Naive thymus-derived CD4-positive, alpha-beta T cell (primary cell): ENCODE measurements at regions of chr22 and their contacts with region 1.

Region 1: DNA sequence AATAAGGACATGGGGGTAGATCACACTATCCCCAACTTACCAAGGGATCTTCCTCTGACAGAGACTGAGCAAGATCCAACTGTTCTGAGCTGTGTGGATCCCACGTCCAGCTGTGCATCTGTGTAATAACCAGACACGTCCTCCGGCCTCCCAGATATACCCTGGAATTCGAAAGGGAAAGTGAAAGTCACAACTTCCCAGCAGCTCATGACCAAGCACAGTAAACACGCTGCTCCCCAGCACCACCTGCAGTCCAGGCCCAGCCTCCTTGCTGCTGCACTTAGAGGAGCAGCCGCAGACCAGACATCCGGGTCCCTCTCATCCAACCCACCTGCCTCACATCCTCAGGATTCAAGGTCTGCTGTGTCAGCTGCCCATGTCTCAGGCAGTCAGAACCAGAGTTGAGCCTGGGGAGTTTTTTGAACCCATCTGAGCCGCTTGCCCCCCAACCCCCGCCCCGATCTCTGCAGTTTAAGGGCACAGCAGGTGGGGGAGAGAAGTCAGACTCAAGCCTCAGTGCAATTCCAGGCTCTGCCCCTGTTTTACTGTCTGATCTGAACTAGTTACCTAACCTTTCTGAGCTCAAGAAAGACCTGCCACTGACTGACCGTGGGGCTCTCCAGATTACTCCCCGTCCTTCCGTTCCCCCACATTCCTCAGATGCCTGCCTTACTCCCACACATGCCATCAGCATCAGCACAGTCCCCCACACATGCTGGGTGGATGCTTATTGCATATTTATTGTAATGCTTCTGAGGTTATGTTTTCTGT is at the start of gene APOL2:
- DNase-seq: peak; percentile 52 to 88 (median 79)
- ATAC-seq: peak; percentile 99
- H3K4me3 ChIP-seq: peak within 1 kb of the TSS; percentile 94
- H3K4me3 Mint-ChIP-seq: peak within 1 kb of the TSS; percentile 93 to 99 (median 99)
- H3K27ac ChIP-seq: peak within 1 kb of the TSS; percentile 76
- H3K27ac Mint-ChIP-seq: peak within 1 kb of the TSS; percentile 94 to 99 (median 98)
- H3K4me1 ChIP-seq: peaks cover 23 to 33% of the 10 kb centered on the region in 2 donors
- H3K4me1 Mint-ChIP-seq: peaks cover 44 to 55% (median 53%) of the 10 kb centered on the region in 7 donors
- H3K27me3 ChIP-seq: no peaks in the 10 kb centered on the region
- H3K27me3 Mint-ChIP-seq: peaks cover 0 to 10% (median 0%) of the 10 kb centered on the region in 5 donors
- total RNA-seq, gene APOL2: 30.1 to 133 (median 66.9) TPM

Region 2: DNA sequence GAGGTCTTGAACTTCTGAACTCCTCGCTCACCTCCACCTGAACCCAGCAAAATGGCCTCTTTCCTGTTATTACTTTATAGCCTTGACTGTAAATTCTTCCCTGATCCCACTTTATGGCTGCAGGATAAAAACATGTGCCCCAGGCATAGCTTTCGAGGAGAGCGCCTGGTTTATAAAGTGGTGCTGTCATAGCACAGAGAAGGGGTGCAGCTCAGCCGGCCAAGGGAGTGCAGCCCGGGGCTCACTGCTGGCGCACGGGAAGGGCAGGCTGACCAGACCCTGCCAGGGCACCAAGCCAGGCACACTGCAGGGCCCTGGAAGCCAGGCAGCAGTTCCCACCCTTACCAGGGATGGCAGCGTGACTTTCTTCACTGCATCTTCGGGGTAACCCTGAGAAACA is 1122.8 kb before region 1 on chr22:
- CTCF ChIA-PET with region 1: no interaction called
- POLR2A ChIA-PET with region 1: no interaction called
- intact Hi-C with region 1: no loop called
- DNase-seq: no peak
- ATAC-seq: no peak
- H3K4me3 ChIP-seq: no peak overlapping the region
- H3K4me3 Mint-ChIP-seq: no peak overlapping the region
- H3K27ac ChIP-seq: no peak overlapping the region
- H3K27ac Mint-ChIP-seq: no peak overlapping the region
- H3K4me1 ChIP-seq: no peaks in the 10 kb centered on the region
- H3K4me1 Mint-ChIP-seq: no peaks in the 10 kb centered on the region
- H3K27me3 ChIP-seq: no peaks in the 10 kb centered on the region
- H3K27me3 Mint-ChIP-seq: peaks cover 0 to 13% (median 0%) of the 10 kb centered on the region in 5 donors

Region 3: DNA sequence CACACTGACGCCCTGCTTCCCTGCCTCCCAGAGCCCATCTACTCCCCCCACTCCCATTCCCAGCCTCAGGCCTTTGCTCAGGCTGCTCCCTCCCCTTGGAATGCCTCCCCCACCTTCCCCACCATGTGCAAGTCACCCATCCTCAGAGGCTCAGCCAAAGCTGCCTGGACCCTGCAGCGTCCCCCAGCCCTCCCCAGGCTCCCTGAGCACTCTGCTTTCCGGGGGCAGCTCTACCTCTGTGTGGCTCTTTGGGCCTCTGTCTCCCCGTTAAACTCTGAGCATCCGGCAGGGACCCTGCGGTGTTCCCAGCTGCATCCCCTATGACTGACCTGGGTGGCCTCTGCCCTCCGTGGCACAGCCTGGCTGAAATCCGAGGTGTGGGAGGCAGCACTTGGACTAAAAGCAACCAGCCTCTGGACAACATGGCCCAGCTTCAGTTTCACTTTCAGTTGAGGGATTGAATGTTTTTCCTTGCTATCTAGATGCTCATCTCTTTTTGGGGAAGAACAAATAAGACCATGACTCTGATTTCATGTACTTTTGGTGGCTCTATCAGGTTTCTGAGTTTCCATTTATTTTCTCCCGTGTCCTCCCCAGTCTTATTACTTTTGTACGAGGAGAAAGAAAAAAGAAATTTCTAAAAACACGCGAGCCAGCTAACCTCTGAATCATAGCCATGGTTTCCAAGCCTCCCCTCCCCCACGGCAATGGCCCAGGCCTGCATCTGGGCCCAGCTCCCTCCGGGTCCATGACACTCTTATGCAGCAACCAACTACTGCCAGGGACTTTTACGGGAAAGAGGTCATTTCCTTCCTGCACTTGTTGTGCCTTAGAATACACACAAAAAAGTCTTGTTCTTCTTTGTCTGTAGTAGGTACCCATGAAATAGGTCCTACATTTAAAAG is 82.8 kb before region 1 on chr22:
- CTCF ChIA-PET with region 1: interaction called, 3 read pairs
- POLR2A ChIA-PET with region 1: interaction called, 4 read pairs
- intact Hi-C with region 1: loop called (anchors 2 kb)
- DNase-seq: peak; percentile 43 to 77 (median 59)
- ATAC-seq: peak; percentile 84
- H3K4me3 ChIP-seq: peak overlapping the region; percentile 59
- H3K4me3 Mint-ChIP-seq: peak overlapping the region; percentile 89 to 98 (median 97)
- H3K27ac ChIP-seq: peak overlapping the region; percentile 96
- H3K27ac Mint-ChIP-seq: peak overlapping the region; percentile 94 to 99 (median 98)
- H3K4me1 ChIP-seq: peaks cover 63 to 73% of the 10 kb centered on the region in 2 donors
- H3K4me1 Mint-ChIP-seq: peaks cover 75 to 99% (median 86%) of the 10 kb centered on the region in 7 donors
- H3K27me3 ChIP-seq: no peaks in the 10 kb centered on the region
- H3K27me3 Mint-ChIP-seq: no peaks in the 10 kb centered on the region

Region 4: GRCh38 chr22:36194971-36195370 is 44.6 kb before region 1 on chr22:
- CTCF ChIA-PET with region 1: interaction called, 8 read pairs
- POLR2A ChIA-PET with region 1: no interaction called
- intact Hi-C with region 1: loop called in 1 of 2 experiments (anchors 2 kb)
- DNase-seq: peak in 7 of 9 donors; percentile 15 to 41 (median 32)
- ATAC-seq: peak; percentile 77
- H3K4me3 ChIP-seq: no peak overlapping the region
- H3K4me3 Mint-ChIP-seq: no peak overlapping the region
- H3K27ac ChIP-seq: no peak overlapping the region
- H3K27ac Mint-ChIP-seq: no peak overlapping the region
- H3K4me1 ChIP-seq: peaks cover 0 to 4% of the 10 kb centered on the region in 2 donors
- H3K4me1 Mint-ChIP-seq: peaks cover 0 to 23% (median 14%) of the 10 kb centered on the region in 7 donors
- H3K27me3 ChIP-seq: no peaks in the 10 kb centered on the region
- H3K27me3 Mint-ChIP-seq: peaks cover 0 to 16% (median 0%) of the 10 kb centered on the region in 5 donors

Region 5: GRCh38 chr22:36221799-36222751 is 17.5 kb before region 1 on chr22:
- CTCF ChIA-PET with region 1: interaction called, 4 read pairs
- POLR2A ChIA-PET with region 1: no interaction called
- intact Hi-C with region 1: loop called in 1 of 2 experiments (anchors 1 kb)
- DNase-seq: peak in 8 of 9 donors; percentile 12 to 41 (median 26)
- ATAC-seq: peak; percentile 93
- H3K4me3 ChIP-seq: no peak overlapping the region
- H3K4me3 Mint-ChIP-seq: peak overlapping the region in 8 of 10 donors; percentile 22 to 73 (median 60)
- H3K27ac ChIP-seq: no peak overlapping the region
- H3K27ac Mint-ChIP-seq: peak overlapping the region in 4 of 9 donors; percentile 28 to 57 (median 46)
- H3K4me1 ChIP-seq: no peaks in the 10 kb centered on the region
- H3K4me1 Mint-ChIP-seq: peaks cover 8 to 16% (median 13%) of the 10 kb centered on the region in 7 donors
- H3K27me3 ChIP-seq: no peaks in the 10 kb centered on the region
- H3K27me3 Mint-ChIP-seq: peaks cover 0 to 29% (median 3%) of the 10 kb centered on the region in 5 donors

Region 6: GRCh38 chr22:36252754-36253517 is 13.3 kb after region 1 on chr22 and contains the start of gene APOL1:
- CTCF ChIA-PET with region 1: interaction called, 11 read pairs
- POLR2A ChIA-PET with region 1: interaction called, 24 read pairs
- intact Hi-C with region 1: loop called (anchors 1 kb)
- DNase-seq: peak in 8 of 9 donors; percentile 47 to 67 (median 55)
- ATAC-seq: peak; percentile 94
- H3K4me3 ChIP-seq: peak within 1 kb of the TSS; percentile 92
- H3K4me3 Mint-ChIP-seq: peak within 1 kb of the TSS; percentile 85 to 99 (median 96)
- H3K27ac ChIP-seq: peak within 1 kb of the TSS; percentile 73
- H3K27ac Mint-ChIP-seq: peak within 1 kb of the TSS; percentile 87 to 98 (median 93)
- H3K4me1 ChIP-seq: peaks cover 11 to 24% of the 10 kb centered on the region in 2 donors
- H3K4me1 Mint-ChIP-seq: peaks cover 31 to 56% (median 45%) of the 10 kb centered on the region in 7 donors
- H3K27me3 ChIP-seq: no peaks in the 10 kb centered on the region
- H3K27me3 Mint-ChIP-seq: no peaks in the 10 kb centered on the region
- total RNA-seq, gene APOL1: 8.6 to 91.1 (median 18.4) TPM

Region 7: GRCh38 chr22:36277482-36278291 is 38.1 kb after region 1 on chr22:
- CTCF ChIA-PET with region 1: interaction called, 8 read pairs
- POLR2A ChIA-PET with region 1: no interaction called
- intact Hi-C with region 1: loop called in 1 of 2 experiments (anchors 1 kb)
- DNase-seq: peak in 8 of 9 donors; percentile 26 to 66 (median 54)
- ATAC-seq: peak; percentile 89
- H3K4me3 ChIP-seq: no peak overlapping the region
- H3K4me3 Mint-ChIP-seq: peak overlapping the region in 3 of 10 donors; percentile 12 to 51 (median 21)
- H3K27ac ChIP-seq: no peak overlapping the region
- H3K27ac Mint-ChIP-seq: peak overlapping the region; percentile 31 to 88 (median 63)
- H3K4me1 ChIP-seq: peaks cover 10 to 16% of the 10 kb centered on the region in 2 donors
- H3K4me1 Mint-ChIP-seq: peaks cover 9 to 24% (median 15%) of the 10 kb centered on the region in 7 donors
- H3K27me3 ChIP-seq: no peaks in the 10 kb centered on the region
- H3K27me3 Mint-ChIP-seq: no peaks in the 10 kb centered on the region

Region 8: DNA sequence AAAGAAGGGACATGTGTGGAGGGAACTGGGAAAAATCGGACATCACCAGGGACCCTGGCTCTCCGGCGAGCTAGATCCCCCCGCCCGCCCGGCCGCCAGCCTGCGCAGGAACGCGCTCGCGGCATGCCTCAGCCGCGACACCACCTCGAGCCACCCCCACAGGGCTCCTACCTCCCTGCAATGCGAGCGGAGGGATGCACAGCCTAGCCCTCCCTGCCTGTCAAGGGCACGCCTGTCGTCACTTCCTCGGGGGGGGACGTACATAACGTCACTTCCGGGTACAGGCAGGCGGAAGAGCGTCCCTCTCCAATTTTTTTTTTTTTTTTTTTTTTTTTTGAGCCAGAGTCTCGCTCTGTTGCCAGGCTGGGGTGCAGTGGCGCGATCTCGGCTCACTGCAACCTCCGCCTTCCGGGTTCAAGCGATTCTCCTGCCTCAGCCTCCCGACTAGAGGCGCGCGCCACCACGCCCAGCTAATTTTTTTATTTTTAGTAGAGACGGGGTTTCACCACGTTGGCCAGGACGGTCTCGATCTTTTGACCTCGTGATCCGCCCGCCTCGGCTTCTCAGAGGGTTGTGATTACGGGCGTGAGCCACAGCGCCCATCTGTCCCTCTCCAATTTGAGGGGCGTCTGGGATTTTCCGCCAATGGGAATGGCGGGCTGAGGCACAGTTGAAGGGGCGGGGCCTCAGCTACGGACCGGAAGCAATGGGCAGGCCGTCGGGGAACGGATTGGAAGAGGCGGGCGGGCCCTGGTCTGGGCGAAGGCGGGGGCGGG is 242.0 kb after region 1 on chr22 and contains the start of gene TXN2:
- CTCF ChIA-PET with region 1: no interaction called
- POLR2A ChIA-PET with region 1: no interaction called
- intact Hi-C with region 1: loop called (anchors 1 to 2 kb)
- DNase-seq: peak; percentile 91 to 99 (median 98)
- ATAC-seq: peak; percentile 90
- H3K4me3 ChIP-seq: peak within 1 kb of the TSS; percentile 55
- H3K4me3 Mint-ChIP-seq: peak within 1 kb of the TSS; percentile 90 to 100 (median 96)
- H3K27ac ChIP-seq: peak within 1 kb of the TSS; percentile 96
- H3K27ac Mint-ChIP-seq: peak within 1 kb of the TSS; percentile 78 to 99 (median 95)
- H3K4me1 ChIP-seq: peaks cover 8 to 15% of the 10 kb centered on the region in 2 donors
- H3K4me1 Mint-ChIP-seq: peaks cover 15 to 30% (median 18%) of the 10 kb centered on the region in 7 donors
- H3K27me3 ChIP-seq: no peaks in the 10 kb centered on the region
- H3K27me3 Mint-ChIP-seq: peaks cover 0 to 2% (median 0%) of the 10 kb centered on the region in 5 donors
- total RNA-seq, gene TXN2: 35.5 to 69.9 (median 37.7) TPM